ENCODE measurements at regions of chr5 and their contacts with region 1.

Region 1: DNA sequence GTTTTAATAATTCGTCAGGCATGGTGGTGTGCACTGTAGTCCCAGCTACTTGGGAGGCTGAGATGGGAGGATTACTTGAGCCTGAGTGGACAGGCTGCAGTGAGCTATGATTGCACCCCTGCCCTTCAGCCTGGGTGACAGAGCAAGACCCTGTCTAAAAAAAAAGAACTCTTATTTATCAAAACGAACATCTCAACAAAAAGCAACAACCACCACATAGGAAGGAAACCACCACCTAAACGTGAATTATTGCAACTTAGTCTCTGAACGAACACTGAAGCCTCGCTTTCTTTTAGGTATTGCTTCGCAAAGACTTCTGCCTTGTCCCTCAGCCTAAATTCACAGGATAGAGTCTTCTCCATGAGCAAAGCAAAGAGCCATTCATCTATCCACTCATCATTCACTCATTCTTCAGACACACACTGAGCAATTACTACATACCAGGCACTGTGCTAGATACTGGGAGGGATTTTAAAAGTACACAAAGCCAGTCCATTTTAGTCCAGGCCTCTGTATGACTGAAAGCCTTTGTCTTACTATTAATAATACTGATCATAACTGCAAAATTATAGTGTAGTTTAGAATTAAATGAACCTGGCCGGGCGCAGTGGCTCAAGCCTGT is 57.4 kb downstream of the THBS4 start:
- DNase-seq: no peak
- ATAC-seq: peak; percentile 10 to 40
- H3K4me3 Mint-ChIP-seq: peak overlapping the region in 9 of 10 donors; percentile 15 to 67 (median 60)
- H3K27ac Mint-ChIP-seq: peak overlapping the region; percentile 44 to 92 (median 86)
- H3K4me1 Mint-ChIP-seq: peaks cover 16 to 38% (median 28%) of the 10 kb centered on the region in 4 donors
- H3K27me3 Mint-ChIP-seq: no peaks in the 10 kb centered on the region

Region 2: DNA sequence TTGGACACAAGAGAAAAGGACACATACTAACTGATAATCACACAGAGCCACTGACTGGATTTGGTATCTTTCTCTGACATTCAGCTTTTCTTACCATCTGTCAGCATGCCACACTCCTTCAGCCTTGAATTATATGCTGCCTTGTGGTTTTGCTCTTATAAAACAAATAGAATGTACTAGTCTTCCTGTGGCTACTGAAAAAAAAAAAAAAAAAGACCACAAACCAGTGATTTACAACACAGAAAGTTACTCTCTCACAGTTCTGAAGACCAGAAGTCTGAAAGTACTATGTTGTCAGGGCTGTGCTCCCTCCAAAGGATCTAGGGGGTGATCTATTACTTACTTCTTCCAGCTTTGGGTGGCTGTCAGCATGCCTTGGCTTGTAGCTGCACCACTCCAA is 24.8 kb after region 1 on chr5:
- POLR2A ChIA-PET with region 1: interaction called, 11 read pairs
- DNase-seq: no peak
- ATAC-seq: peak; percentile 36 to 45
- H3K4me3 Mint-ChIP-seq: peak overlapping the region in 6 of 10 donors; percentile 11 to 74 (median 54)
- H3K27ac Mint-ChIP-seq: peak overlapping the region; percentile 76 to 89 (median 82)
- H3K4me1 Mint-ChIP-seq: peaks cover 42 to 75% (median 62%) of the 10 kb centered on the region in 4 donors
- H3K27me3 Mint-ChIP-seq: no peaks in the 10 kb centered on the region

Region 3: DNA sequence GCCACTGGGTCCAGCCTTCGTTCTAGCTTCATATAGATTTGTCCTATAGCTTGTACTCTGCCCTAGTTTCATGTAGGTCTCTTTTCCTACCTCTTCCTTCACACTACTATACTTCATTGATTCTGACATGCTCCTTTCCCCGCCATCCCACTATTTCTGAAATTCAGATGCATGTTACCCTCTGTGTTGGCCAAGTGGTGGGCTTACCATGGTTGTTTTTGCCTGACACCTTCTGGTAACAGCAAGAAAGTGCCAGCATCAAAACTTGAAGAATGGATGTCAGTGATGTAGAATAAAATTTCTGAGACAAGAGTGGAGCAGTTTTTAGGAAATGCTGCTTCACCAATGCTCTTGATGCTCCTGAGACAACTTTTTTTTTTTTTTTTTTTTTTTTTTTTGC is 182.8 kb after region 1 on chr5:
- POLR2A ChIA-PET with region 1: interaction called, 21 read pairs
- DNase-seq: peak in 7 of 10 donors; percentile 12 to 72 (median 45)
- ATAC-seq: peak; percentile 67 to 88
- H3K4me3 Mint-ChIP-seq: no peak overlapping the region
- H3K27ac Mint-ChIP-seq: peak overlapping the region in 5 of 10 donors; percentile 1 to 86 (median 61)
- H3K4me1 Mint-ChIP-seq: peaks cover 9 to 27% (median 21%) of the 10 kb centered on the region in 4 donors
- H3K27me3 Mint-ChIP-seq: no peaks in the 10 kb centered on the region

Region 4: GRCh38 chr5:80308526-80308925 is 215.9 kb after region 1 on chr5:
- POLR2A ChIA-PET with region 1: interaction called, 20 read pairs
- DNase-seq: no peak
- ATAC-seq: no peak
- H3K4me3 Mint-ChIP-seq: no peak overlapping the region
- H3K27ac Mint-ChIP-seq: no peak overlapping the region
- H3K4me1 Mint-ChIP-seq: no peaks in the 10 kb centered on the region
- H3K27me3 Mint-ChIP-seq: no peaks in the 10 kb centered on the region